ENCODE measurements at regions of chr14 and their contacts with region 1.

Region 1: GRCh38 chr14:37034410-37035285 is 137.8 kb downstream of the SLC25A21 start:
- DNase-seq: no peak
- H3K4me3 ChIP-seq: no peak overlapping the region
- H3K27ac ChIP-seq: no peak overlapping the region
- H3K4me1 ChIP-seq: peaks cover 28% of the 10 kb centered on the region
- H3K27me3 ChIP-seq: no peaks in the 10 kb centered on the region
- CTCF ChIP-seq: no peak
- POLR2A ChIP-seq: no peak

Region 2: DNA sequence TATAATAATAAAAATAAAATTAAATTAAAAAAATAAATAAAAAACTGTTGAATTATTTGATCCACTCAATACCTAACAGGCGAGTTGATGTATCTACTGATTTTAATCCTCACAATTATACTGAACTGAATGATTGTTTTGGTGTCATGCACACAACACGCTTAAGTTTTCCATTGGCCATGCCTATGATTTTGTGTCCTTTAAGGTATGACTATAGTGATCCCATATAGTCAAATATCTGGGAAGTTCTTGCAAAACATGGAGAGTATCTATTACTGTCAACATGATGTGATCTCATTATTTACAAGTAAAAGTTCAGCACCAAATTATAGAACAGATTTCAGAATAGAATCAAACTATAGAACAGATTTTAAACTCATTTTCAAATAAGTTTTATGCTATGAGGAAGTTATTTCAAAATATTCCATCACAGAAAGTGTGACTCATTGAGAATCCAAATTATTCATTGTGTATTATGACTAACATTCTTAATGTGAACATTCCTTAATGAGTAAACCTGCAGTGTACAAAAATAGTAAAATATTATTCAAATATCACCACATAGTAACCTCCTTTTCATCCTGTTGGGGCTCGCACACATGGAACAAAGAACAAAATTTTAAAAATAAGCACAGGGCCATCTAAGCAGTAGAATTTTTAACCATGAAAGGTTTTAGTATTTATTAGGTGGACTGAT is 52.7 kb before region 1 on chr14:
- CTCF ChIA-PET with region 1: no interaction called
- POLR2A ChIA-PET with region 1: no interaction called
- dilution Hi-C with region 1: no loop called
- intact Hi-C with region 1: loop called (anchors 5 kb)
- DNase-seq: peak; percentile 73
- H3K4me3 ChIP-seq: no peak overlapping the region
- H3K27ac ChIP-seq: peak overlapping the region; percentile 55
- H3K4me1 ChIP-seq: peaks cover 7% of the 10 kb centered on the region
- H3K27me3 ChIP-seq: no peaks in the 10 kb centered on the region
- CTCF ChIP-seq: no peak
- POLR2A ChIP-seq: no peak

Region 3: GRCh38 chr14:37023875-37024565 is 10.6 kb before region 1 on chr14:
- CTCF ChIA-PET with region 1: interaction called, 10 read pairs
- POLR2A ChIA-PET with region 1: no interaction called
- dilution Hi-C with region 1: no loop called
- intact Hi-C with region 1: no loop called
- DNase-seq: no peak
- H3K4me3 ChIP-seq: no peak overlapping the region
- H3K27ac ChIP-seq: no peak overlapping the region
- H3K4me1 ChIP-seq: no peaks in the 10 kb centered on the region
- H3K27me3 ChIP-seq: no peaks in the 10 kb centered on the region
- CTCF ChIP-seq: no peak
- POLR2A ChIP-seq: no peak

Region 4: DNA sequence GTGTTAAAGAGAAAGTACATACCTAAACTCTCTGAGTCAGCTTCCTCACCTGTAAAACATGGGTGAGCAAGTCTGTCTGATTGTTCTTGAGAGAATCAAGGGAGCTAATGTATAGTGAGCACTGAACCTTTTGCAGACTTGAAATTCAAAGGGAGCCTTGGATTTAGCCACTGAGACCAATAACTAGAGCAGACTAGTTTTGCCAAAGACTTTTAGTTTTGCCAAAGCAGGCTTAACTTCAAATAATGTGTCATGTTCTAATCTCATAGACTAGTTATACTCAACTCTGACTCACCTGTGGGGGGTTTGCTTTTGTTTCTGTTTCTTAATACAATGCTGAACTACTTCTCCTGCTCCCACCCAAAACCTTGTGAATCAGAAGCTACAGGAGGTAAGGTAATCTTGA is 14.0 kb after region 1 on chr14:
- CTCF ChIA-PET with region 1: interaction called, 3 read pairs
- POLR2A ChIA-PET with region 1: no interaction called
- dilution Hi-C with region 1: no loop called
- intact Hi-C with region 1: loop called (anchors 1 kb)
- DNase-seq: peak; percentile 33
- H3K4me3 ChIP-seq: no peak overlapping the region
- H3K27ac ChIP-seq: no peak overlapping the region
- H3K4me1 ChIP-seq: peaks cover 39% of the 10 kb centered on the region
- H3K27me3 ChIP-seq: no peaks in the 10 kb centered on the region
- CTCF ChIP-seq: no peak
- POLR2A ChIP-seq: no peak